Activated B cell treated with CpG ODN at 0.5 μM for 24 hours (primary cell): ENCODE measurements at regions of chr5 and their contacts with region 1.

Region 1: GRCh38 chr5:124741711-124742496 is 4.5 kb downstream of the ZNF608 start:
- DNase-seq: no peak
- ATAC-seq: no peak
- H3K4me3 Mint-ChIP-seq: peak overlapping the region; percentile 36
- H3K27ac Mint-ChIP-seq: peak overlapping the region; percentile 79
- H3K4me1 Mint-ChIP-seq: peaks cover 32% of the 10 kb centered on the region
- H3K27me3 Mint-ChIP-seq: no peaks in the 10 kb centered on the region
- CTCF ChIP-seq: no peak

Region 2: DNA sequence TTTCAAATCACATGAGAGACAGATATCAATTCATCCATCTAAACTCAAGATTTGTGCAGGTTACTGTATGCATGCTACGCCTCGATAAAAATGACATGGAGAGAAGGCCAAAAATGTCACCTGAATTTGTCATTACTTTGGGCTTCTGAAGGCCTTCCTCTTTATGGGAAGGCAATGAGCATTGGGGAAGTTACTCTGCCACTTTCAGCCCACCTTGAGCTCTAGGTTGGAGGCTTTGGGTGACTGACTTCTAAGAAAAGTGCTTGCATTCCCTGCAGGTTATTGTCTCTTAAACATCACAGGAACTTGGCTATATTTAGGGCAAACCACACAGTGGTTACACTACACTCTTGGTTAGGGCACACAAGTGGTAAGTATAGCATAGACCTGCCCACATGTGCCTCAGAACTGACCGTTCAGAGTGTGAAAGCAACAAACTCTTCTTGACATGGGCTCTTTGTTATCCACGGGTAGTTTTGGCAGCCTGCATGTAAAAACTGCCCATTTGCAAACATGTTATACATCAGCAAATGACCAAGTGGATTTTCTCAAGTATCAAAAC is 165.0 kb before region 1 on chr5:
- CTCF ChIA-PET with region 1: no interaction called
- POLR2A ChIA-PET with region 1: no interaction called
- intact Hi-C with region 1: no loop called
- DNase-seq: no peak
- ATAC-seq: no peak
- H3K4me3 Mint-ChIP-seq: no peak overlapping the region
- H3K27ac Mint-ChIP-seq: no peak overlapping the region
- H3K4me1 Mint-ChIP-seq: peaks cover 14% of the 10 kb centered on the region
- H3K27me3 Mint-ChIP-seq: no peaks in the 10 kb centered on the region
- CTCF ChIP-seq: no peak

Region 3: GRCh38 chr5:124718380-124718789 is 23.5 kb before region 1 on chr5:
- CTCF ChIA-PET with region 1: no interaction called
- POLR2A ChIA-PET with region 1: interaction called, 40 read pairs
- intact Hi-C with region 1: no loop called
- DNase-seq: no peak
- ATAC-seq: no peak
- H3K4me3 Mint-ChIP-seq: peak overlapping the region; percentile 37
- H3K27ac Mint-ChIP-seq: peak overlapping the region; percentile 65
- H3K4me1 Mint-ChIP-seq: peaks cover 60% of the 10 kb centered on the region
- H3K27me3 Mint-ChIP-seq: no peaks in the 10 kb centered on the region
- CTCF ChIP-seq: no peak

Region 4: GRCh38 chr5:124725040-124725434 is 16.9 kb before region 1 on chr5:
- CTCF ChIA-PET with region 1: interaction called, 4 read pairs
- POLR2A ChIA-PET with region 1: interaction called, 22 read pairs
- intact Hi-C with region 1: loop called (anchors 1 kb)
- DNase-seq: no peak
- ATAC-seq: peak; percentile 77
- H3K4me3 Mint-ChIP-seq: peak overlapping the region; percentile 83
- H3K27ac Mint-ChIP-seq: peak overlapping the region; percentile 84
- H3K4me1 Mint-ChIP-seq: peaks cover 53% of the 10 kb centered on the region
- H3K27me3 Mint-ChIP-seq: no peaks in the 10 kb centered on the region
- CTCF ChIP-seq: no peak

Region 5: DNA sequence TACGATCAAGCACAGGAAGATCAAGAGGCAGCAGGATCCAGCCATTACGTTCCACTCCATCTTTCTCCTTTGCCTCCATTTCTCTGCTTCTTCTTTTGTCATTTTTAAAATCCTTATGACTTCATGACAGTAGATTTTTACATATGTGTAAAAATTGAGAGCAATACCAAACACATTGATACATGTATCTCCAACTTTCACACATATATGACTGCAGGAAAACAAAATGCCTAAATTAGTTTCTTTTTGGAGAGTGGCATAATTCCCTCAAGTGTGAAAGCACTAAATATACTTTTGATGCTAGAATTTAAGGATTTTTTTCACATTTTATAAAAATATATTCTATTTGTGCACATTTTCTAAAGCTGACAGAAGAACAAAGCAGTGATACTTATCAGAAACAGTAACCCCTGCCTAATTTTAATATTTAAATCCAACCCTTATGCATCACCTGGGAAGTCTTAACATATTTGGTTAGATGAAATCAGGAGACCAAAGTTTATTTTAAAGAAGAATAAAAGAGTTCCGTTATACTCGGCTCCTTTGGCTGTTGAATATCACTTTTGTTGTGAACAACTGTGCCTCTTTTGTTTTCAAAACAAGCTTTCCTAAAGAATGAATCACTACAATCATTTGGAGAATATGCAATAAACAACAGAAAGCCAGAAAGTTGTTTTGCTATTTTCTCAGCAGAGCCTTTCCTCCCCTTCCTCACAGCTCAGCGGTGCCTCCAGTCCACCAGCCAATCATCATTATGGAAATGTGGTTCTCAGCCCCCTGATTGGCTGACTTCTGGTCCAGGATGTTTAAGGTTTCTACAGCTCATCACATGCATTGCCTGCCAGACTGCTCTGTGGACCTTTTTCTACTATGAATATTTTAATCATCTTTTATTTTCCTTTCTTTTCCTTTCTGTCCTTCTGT is 13.4 kb after region 1 on chr5:
- CTCF ChIA-PET with region 1: no interaction called
- POLR2A ChIA-PET with region 1: interaction called, 13 read pairs
- intact Hi-C with region 1: no loop called
- DNase-seq: no peak
- ATAC-seq: no peak
- H3K4me3 Mint-ChIP-seq: no peak overlapping the region
- H3K27ac Mint-ChIP-seq: no peak overlapping the region
- H3K4me1 Mint-ChIP-seq: no peaks in the 10 kb centered on the region
- H3K27me3 Mint-ChIP-seq: no peaks in the 10 kb centered on the region
- CTCF ChIP-seq: no peak